Activated CD4-positive, alpha-beta memory T cell treated with anti-CD3 and anti-CD28 coated beads for 36 hours (primary cell): ENCODE measurements at regions of chr1 and their contacts with region 1.

Region 1: GRCh38 chr1:41862384-41863174 is 56.1 kb downstream of the HIVEP3 start:
- DNase-seq: peak; percentile 83
- H3K4me3 Mint-ChIP-seq: peak overlapping the region; percentile 18
- H3K27ac Mint-ChIP-seq: peak overlapping the region; percentile 83
- H3K4me1 Mint-ChIP-seq: peaks cover 36% of the 10 kb centered on the region
- H3K27me3 Mint-ChIP-seq: no peaks in the 10 kb centered on the region

Region 2: GRCh38 chr1:41850029-41850428 is 12.6 kb before region 1 on chr1:
- CTCF ChIA-PET with region 1: interaction called, 5 read pairs
- POLR2A ChIA-PET with region 1: interaction called, 3 read pairs
- intact Hi-C with region 1: loop called (anchors 1 kb)
- DNase-seq: peak; percentile 47
- H3K4me3 Mint-ChIP-seq: no peak overlapping the region
- H3K27ac Mint-ChIP-seq: no peak overlapping the region
- H3K4me1 Mint-ChIP-seq: peaks cover 33% of the 10 kb centered on the region
- H3K27me3 Mint-ChIP-seq: no peaks in the 10 kb centered on the region

Region 3: GRCh38 chr1:41891199-41891896 is 28.8 kb after region 1 on chr1:
- CTCF ChIA-PET with region 1: interaction called, 7 read pairs
- POLR2A ChIA-PET with region 1: interaction called, 3 read pairs
- intact Hi-C with region 1: loop called (anchors 1 kb)
- DNase-seq: peak; percentile 70
- H3K4me3 Mint-ChIP-seq: peak overlapping the region; percentile 78
- H3K27ac Mint-ChIP-seq: peak overlapping the region; percentile 90
- H3K4me1 Mint-ChIP-seq: peaks cover 44% of the 10 kb centered on the region
- H3K27me3 Mint-ChIP-seq: no peaks in the 10 kb centered on the region